Activated CD4-positive, alpha-beta T cell treated with anti-CD3 and anti-CD28 coated beads for 36 hours (primary cell): ENCODE measurements at regions of chr11 and their contacts with region 1.

Region 1: DNA sequence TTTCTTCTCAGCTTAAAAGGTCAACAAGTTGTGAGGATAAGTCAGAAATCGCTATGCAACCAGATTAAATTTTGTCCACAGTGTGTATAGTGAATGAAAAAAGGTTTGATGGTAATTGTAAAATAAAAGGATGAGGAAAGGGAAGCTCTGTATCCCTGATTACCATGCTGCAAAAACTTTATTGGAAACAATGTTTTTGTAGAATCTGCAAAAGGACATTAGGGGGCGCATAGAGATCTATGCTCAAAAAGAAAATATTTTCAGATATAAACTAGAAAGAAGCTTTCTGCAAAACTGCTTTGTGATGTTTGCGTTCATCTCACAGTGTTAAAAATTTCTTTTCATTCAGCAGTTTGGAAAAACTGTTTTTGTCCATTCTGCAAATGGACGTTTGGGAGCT is 390.5 kb downstream of the OR4C45 start:
- DNase-seq: no peak
- ATAC-seq: no peak
- H3K4me3 Mint-ChIP-seq: no peak overlapping the region
- H3K27ac Mint-ChIP-seq: no peak overlapping the region
- H3K4me1 Mint-ChIP-seq: no peaks in the 10 kb centered on the region
- H3K27me3 Mint-ChIP-seq: no peaks in the 10 kb centered on the region

Region 2: DNA sequence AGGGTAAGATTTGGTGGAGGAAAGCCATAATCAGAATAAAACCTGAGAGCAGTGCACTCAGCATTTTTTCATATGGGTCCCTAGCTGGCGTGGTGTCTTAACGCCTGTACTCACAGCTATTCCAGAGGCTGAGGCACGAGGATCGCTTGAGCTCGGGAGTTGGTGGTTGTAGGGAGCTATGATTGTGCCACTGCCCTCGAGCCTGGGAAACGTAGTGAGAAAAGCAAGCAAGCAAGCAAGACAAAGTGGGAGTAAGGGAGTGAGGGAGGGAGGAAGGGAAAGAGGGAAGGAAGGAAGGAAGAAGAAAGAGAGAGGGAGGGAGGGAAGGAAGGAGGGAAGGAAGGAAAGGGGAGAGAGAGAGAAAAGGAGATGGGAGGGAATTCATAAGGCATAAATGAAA is 148.0 kb before region 1 on chr11:
- CTCF ChIA-PET with region 1: no interaction called
- POLR2A ChIA-PET with region 1: no interaction called
- intact Hi-C with region 1: loop called in 1 of 2 experiments (anchors 10 kb)
- DNase-seq: no peak
- ATAC-seq: no peak
- H3K4me3 Mint-ChIP-seq: no peak overlapping the region
- H3K27ac Mint-ChIP-seq: no peak overlapping the region
- H3K4me1 Mint-ChIP-seq: no peaks in the 10 kb centered on the region
- H3K27me3 Mint-ChIP-seq: no peaks in the 10 kb centered on the region

Region 3: DNA sequence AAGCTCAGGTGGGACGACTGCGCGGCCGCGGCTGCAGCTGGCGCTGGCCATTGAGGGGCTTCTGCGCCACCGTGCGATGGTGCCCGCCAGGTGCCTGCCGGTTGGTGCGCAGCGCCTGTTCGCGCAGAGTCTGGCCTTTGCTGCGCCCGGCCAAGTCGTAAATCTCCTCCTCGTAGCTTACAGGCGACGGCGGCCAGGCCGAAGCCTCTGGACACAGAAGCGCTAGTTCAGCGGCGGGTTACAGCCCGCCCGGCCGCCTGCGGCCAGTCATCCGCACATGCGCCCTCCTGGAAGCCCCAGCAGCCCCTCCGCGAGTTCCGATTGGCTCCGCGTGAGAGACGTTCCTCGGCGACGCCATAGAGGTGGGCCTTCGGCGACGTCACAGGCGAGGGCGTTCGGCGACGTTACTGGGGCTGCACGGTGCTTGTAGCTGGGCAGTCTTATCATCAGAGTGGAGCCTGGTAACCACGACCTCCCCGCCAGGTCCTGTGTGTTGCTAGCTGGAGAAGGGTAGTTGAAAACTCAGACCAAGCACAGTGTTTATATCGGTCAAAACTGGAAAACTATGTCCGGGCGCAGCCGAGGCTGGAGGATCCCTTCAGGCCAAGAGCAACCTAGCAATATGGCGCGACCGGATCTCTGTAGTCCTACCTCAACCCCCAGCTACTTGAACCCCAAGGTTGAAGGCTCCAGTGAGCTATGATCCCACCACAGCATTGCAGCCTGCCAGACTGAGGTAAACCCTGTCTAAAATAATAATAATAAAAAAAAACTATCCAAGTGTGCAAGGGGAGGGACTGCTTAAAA is 124.8 kb before region 1 on chr11:
- CTCF ChIA-PET with region 1: no interaction called
- POLR2A ChIA-PET with region 1: no interaction called
- intact Hi-C with region 1: no loop called
- DNase-seq: no peak
- ATAC-seq: no peak
- H3K4me3 Mint-ChIP-seq: no peak overlapping the region
- H3K27ac Mint-ChIP-seq: no peak overlapping the region
- H3K4me1 Mint-ChIP-seq: no peaks in the 10 kb centered on the region
- H3K27me3 Mint-ChIP-seq: no peaks in the 10 kb centered on the region

Region 4: DNA sequence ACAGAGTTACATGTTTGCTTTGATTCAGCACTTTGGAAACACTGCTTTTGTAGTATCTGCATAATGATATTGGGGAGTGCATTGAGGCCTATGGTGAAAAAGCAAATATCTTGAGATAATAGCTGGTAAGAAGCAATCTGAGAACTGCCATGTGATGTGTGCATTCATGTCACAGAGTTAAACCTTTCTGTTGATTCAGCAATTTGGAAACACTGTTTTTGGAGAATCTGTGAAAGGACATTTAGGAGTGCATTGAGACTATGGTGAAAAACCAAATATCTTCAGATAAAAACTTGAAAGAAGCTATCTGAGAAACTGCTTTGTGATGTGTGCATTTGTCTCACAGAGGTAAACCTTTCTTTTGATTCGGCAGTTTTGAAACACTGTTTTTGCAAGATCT is 43.7 kb before region 1 on chr11:
- CTCF ChIA-PET with region 1: no interaction called
- POLR2A ChIA-PET with region 1: no interaction called
- intact Hi-C with region 1: loop called in 1 of 2 experiments (anchors 10 kb)
- DNase-seq: no peak
- ATAC-seq: no peak
- H3K4me3 Mint-ChIP-seq: no peak overlapping the region
- H3K27ac Mint-ChIP-seq: no peak overlapping the region
- H3K4me1 Mint-ChIP-seq: no peaks in the 10 kb centered on the region
- H3K27me3 Mint-ChIP-seq: no peaks in the 10 kb centered on the region

Region 5: DNA sequence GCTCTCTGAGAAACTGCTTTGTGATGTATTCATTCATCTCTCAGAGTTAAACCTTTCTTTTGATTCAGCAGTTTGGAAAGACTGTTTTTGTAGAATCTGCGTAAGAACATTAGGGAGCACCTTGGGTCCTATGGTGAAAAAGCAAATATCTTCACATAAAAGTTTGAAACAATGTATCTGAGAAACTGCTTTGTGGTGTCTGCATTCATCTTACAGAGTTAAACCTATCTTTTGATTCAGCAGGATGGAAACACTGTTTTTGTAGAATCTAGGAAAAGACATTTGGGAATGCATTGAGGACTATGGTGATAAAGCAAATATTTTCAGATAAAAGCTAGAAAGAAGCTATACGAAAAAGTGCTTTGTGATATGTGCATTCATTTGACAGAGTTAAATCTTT is 29.2 kb before region 1 on chr11:
- CTCF ChIA-PET with region 1: no interaction called
- POLR2A ChIA-PET with region 1: no interaction called
- intact Hi-C with region 1: no loop called
- DNase-seq: no peak
- ATAC-seq: no peak
- H3K4me3 Mint-ChIP-seq: no peak overlapping the region
- H3K27ac Mint-ChIP-seq: no peak overlapping the region
- H3K4me1 Mint-ChIP-seq: no peaks in the 10 kb centered on the region
- H3K27me3 Mint-ChIP-seq: no peaks in the 10 kb centered on the region